ENCODE measurements at regions of chr4 and their contacts with region 1.

Region 1: DNA sequence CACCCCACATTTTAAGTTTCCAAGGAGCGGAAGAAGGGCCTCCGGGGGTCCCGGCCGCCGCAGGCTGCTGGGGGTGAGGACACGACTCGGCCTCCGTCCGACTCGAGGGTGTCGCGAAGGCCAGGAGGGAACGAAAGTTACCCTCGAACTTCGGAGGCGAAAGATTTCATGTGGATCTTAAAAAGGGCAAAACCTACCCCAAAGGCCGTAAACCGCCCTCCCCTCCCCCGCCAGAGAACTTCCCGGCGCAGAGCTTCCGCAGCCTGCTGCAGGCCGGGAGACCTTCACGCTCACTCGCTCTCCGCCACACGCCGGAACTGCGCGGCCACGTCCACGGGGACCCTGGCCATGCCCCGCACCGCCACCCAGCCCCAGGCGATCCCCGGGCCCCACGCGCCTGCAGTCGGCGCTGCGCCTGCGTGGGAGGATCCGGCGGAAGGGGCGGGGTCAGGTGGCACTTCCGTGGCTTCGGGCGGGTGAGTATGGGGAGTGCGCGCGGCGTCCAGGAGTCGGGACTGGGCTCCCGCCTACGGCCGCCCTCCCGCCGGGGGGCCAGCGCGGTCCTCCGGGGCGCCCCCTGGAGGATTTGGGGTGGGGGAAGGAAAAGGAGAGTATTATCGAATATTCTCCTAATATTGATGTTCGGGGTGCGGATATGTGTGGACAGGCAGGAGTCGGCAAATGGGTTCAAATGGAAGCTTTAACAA is at the start of gene MMAA:
- DNase-seq: peak; percentile 95 to 96
- H3K4me3 ChIP-seq: peak within 1 kb of the TSS; percentile 67
- H3K4me3 Mint-ChIP-seq: peak within 1 kb of the TSS; percentile 94
- H3K27ac Mint-ChIP-seq: peak within 1 kb of the TSS; percentile 97
- H3K4me1 ChIP-seq: peaks cover 14% of the 10 kb centered on the region; the same call in 1 of the 2 replicates
- H3K4me1 Mint-ChIP-seq: no peaks in the 10 kb centered on the region
- H3K27me3 ChIP-seq: no peaks in the 10 kb centered on the region
- H3K27me3 Mint-ChIP-seq: peaks cover 2% of the 10 kb centered on the region
- CTCF ChIP-seq: peak; percentile 44 to 54
- total RNA-seq, gene MMAA: 1.7 and 3.3 TPM in 2 replicates

Region 2: DNA sequence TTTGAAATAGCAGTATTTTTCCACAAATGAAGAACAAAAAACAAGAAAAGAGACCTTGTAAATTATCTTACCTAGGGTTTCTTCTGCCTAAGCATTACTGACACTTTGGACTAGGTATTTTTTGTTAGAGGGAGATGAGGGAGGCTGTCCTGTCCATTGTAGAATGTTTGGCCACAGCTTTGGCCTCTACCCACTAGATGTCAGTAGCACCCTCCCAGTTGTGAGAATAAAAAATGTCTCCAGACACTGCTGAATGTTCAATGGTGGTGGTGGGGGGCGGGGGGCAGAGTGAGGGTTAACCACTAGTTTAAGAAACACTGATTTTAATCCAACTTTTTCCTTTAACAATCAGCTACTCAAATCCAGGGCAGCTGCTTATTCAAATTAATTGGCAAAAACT is 464.5 kb before region 1 on chr4:
- CTCF ChIA-PET with region 1: no interaction called
- POLR2A ChIA-PET with region 1: no interaction called
- intact Hi-C with region 1: loop called (anchors 1 kb)
- DNase-seq: peak in 1 of 2 experiments; percentile 33
- H3K4me3 ChIP-seq: no peak overlapping the region
- H3K4me3 Mint-ChIP-seq: no peak overlapping the region
- H3K27ac Mint-ChIP-seq: no peak overlapping the region
- H3K4me1 ChIP-seq: no peaks in the 10 kb centered on the region
- H3K4me1 Mint-ChIP-seq: no peaks in the 10 kb centered on the region
- H3K27me3 ChIP-seq: no peaks in the 10 kb centered on the region
- H3K27me3 Mint-ChIP-seq: no peaks in the 10 kb centered on the region
- CTCF ChIP-seq: peak; percentile 25 to 65

Region 3: DNA sequence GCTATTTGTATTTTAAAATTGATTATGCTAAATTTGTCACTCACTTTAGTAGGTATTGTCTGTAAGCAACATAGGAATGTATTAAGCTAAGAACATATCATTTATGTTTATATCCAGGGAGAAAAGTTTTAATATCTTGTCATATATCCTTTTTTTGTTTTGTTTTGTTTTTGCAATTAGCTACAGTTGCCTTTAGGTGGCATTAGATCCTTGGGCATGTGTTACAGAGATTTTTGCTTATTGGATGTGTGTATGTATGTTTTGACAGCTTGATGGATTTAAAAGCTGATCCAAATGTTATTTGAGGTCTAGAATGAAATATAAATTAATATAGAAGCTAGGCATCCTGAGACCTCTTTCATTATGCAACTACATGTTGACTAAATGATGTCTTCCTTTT is 402.6 kb before region 1 on chr4:
- CTCF ChIA-PET with region 1: interaction called, 3 read pairs
- POLR2A ChIA-PET with region 1: no interaction called
- intact Hi-C with region 1: loop called (anchors 2 kb)
- DNase-seq: no peak
- H3K4me3 ChIP-seq: no peak overlapping the region
- H3K4me3 Mint-ChIP-seq: no peak overlapping the region
- H3K27ac Mint-ChIP-seq: no peak overlapping the region
- H3K4me1 ChIP-seq: no peaks in the 10 kb centered on the region
- H3K4me1 Mint-ChIP-seq: no peaks in the 10 kb centered on the region
- H3K27me3 ChIP-seq: no peaks in the 10 kb centered on the region; the same call in 1 of the 2 replicates
- H3K27me3 Mint-ChIP-seq: peaks cover 2% of the 10 kb centered on the region
- CTCF ChIP-seq: peak in 1 of 2 experiments; percentile 32

Region 4: DNA sequence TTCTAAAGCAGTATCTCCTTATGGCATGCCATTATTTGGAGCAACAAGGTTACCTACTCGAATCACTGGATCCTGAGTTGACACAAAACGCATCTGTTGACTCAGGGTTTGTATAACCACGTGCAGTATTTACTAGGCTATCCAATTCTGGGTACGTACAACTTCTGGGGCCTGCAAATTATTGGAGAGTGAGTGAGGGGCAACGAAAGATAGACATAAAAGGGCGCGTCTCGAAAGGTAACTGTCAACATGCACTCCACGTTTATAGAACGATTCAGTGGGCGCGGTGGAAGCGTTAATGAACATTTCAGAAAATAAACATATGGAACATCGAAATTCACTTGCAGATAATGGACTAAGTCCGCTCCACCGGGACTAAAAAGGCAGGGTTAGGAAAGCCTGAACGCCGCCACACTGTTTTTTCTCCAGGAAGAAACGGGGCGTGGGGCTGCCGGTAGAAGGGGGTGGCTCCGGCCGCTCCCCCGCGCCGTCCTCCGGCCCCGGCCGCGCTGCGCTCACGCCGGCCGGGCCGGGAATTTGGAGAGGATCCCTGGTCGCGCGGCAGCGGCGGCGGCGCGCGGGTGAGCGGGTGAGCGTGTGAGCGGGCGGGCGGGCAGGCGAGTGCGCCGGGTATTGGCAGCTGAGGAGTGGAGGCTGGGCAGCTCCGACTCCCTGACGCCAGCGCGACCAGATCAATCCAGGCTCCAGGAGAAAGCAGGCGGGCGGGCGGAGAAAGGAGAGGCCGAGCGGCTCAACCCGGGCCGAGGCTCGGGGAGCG is 137.7 kb before region 1 on chr4 and contains the start of gene SMAD1:
- CTCF ChIA-PET with region 1: no interaction called
- POLR2A ChIA-PET with region 1: no interaction called
- intact Hi-C with region 1: loop called (anchors 10 kb)
- DNase-seq: peak; percentile 68 to 71
- H3K4me3 ChIP-seq: peak within 1 kb of the TSS; percentile 58
- H3K4me3 Mint-ChIP-seq: no peak within 1 kb of the TSS
- H3K27ac Mint-ChIP-seq: peak within 1 kb of the TSS; percentile 57
- H3K4me1 ChIP-seq: no peaks in the 10 kb centered on the region
- H3K4me1 Mint-ChIP-seq: peaks cover 8% of the 10 kb centered on the region
- H3K27me3 ChIP-seq: no peaks in the 10 kb centered on the region
- H3K27me3 Mint-ChIP-seq: peaks cover 5% of the 10 kb centered on the region
- CTCF ChIP-seq: no peak
- total RNA-seq, gene SMAD1: 4.9 and 5.3 TPM in 2 replicates

Region 5: DNA sequence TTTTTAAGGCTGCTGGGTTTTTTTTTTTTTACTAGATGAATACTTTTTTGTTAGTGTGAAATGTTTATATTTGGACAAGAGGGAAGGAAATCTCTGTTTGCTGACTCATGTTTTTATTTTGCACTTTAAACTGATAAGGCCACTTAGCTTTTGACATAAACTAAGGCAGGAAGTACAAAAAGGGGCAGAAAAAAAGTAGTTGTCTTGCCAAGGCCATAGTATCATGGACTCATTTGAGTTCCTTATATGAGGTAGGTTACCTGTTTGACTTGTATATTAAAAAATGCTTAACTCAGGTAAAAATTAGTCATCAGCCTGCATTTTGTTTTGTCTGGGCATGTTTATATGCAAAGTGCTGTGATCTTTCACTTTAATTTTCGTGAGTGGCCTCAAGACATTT is 111.4 kb before region 1 on chr4:
- CTCF ChIA-PET with region 1: no interaction called
- POLR2A ChIA-PET with region 1: no interaction called
- intact Hi-C with region 1: no loop called
- DNase-seq: no peak
- H3K4me3 ChIP-seq: no peak overlapping the region
- H3K4me3 Mint-ChIP-seq: no peak overlapping the region
- H3K27ac Mint-ChIP-seq: no peak overlapping the region
- H3K4me1 ChIP-seq: no peaks in the 10 kb centered on the region
- H3K4me1 Mint-ChIP-seq: no peaks in the 10 kb centered on the region
- H3K27me3 ChIP-seq: no peaks in the 10 kb centered on the region
- H3K27me3 Mint-ChIP-seq: no peaks in the 10 kb centered on the region
- CTCF ChIP-seq: no peak